ENCODE measurements at regions of chr17 and their contacts with region 1.

Region 1: DNA sequence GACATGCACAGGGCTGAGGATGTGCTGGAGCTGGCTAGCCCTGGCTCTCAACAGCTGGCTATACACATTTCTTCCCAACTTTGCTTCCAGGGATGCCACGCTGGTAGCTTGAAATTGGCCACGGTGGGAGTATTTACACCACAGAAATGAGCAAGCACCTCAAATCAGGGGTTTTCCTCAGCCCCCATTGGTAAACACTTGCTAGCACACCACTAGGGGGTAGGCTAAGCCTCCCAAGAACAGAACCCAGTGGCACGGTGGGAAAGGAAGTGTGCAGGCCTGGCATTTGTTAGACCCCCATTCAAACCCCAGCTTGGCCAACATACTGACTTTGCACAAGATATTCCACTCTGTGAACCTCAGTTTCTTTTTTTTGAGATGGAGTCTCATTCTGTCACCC is 12.9 kb downstream of the DRC3 start:
- DNase-seq: peak; percentile 29
- ATAC-seq: peak; percentile 77
- H3K4me3 Mint-ChIP-seq: no peak overlapping the region
- H3K27ac Mint-ChIP-seq: no peak overlapping the region
- H3K4me1 Mint-ChIP-seq: no peaks in the 10 kb centered on the region
- H3K27me3 Mint-ChIP-seq: no peaks in the 10 kb centered on the region
- CTCF ChIP-seq: peak; percentile 22

Region 2: DNA sequence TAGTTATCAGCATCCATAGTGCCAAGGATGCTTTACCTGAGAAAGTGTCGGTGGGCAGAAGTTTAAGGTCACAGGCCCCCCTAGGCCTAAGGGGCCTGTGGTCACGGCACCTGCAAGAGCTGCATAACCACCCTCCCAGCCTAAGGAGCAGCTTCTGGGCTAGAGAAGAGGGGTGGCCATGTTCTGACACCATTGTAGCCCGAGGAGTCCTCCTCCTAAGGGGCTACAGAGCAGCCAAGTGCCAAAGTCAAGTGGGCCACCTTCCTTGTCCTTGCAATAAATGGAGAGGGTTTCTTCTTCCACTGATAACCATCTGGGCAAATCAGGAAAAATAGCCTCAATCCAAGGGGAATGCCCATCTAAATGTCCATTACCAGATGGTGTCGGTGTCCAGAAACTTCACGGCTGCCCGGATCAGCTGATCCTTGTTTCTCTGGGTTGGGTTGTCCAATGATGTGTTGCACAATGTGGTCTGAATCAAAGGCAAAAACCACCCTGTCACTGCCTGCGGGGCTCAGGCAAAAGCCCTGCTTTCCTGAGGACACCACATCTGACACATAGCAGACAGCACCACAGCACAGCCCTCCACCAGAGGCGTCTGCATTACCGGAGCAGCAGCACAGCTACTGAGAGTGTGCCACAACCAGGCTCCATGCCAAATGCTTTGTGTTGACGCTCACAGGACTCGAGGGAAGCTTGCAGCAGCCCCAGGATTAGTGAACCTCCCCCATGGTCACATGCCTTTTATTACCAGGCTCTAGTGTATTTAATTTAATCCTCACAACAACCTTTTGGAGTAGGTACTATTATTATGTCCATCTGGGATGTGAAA is 40.6 kb after region 1 on chr17:
- CTCF ChIA-PET with region 1: interaction called, 11 read pairs
- POLR2A ChIA-PET with region 1: no interaction called
- intact Hi-C with region 1: no loop called
- DNase-seq: peak; percentile 63
- ATAC-seq: peak; percentile 77
- H3K4me3 Mint-ChIP-seq: no peak overlapping the region
- H3K27ac Mint-ChIP-seq: peak overlapping the region; percentile 27
- H3K4me1 Mint-ChIP-seq: peaks cover 16% of the 10 kb centered on the region
- H3K27me3 Mint-ChIP-seq: no peaks in the 10 kb centered on the region
- CTCF ChIP-seq: no peak

Region 3: DNA sequence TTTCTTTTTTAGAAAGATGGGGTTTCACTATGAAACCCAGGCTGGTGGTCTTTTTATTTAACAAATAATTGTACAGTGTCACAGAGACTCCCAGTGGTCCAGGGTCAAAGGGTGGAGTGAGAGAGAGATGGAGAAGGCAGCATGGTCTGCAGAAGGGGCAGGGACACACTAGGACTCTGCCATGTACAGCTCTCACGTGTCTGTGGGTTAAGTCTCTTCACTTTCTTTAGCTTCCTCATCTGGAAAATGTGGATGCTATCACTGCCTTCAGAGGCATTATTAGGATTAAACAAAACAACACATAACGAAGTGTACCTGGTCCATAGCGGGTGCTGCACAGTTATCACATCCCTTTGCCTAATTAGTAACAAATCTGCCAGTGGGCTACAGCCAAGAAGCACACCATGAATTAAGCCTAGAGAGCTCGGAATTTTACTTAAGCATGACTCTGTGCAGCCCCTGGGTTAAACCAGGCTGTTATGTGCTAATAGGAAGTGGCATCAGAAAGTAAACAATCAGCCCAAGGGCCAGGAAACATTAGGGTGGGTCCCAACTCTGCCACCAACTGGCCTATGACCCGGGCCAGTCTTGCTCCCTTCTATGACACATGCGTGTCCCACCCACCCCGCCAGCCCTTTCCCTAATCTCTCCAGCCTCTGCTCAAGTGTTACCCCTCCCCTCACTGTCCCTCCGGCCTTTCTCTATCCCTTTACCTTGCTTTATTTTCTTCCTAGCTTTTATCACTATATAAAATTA is 315.3 kb after region 1 on chr17:
- CTCF ChIA-PET with region 1: no interaction called
- POLR2A ChIA-PET with region 1: no interaction called
- intact Hi-C with region 1: no loop called
- DNase-seq: no peak
- ATAC-seq: no peak
- H3K4me3 Mint-ChIP-seq: no peak overlapping the region
- H3K27ac Mint-ChIP-seq: no peak overlapping the region
- H3K4me1 Mint-ChIP-seq: no peaks in the 10 kb centered on the region
- H3K27me3 Mint-ChIP-seq: no peaks in the 10 kb centered on the region
- CTCF ChIP-seq: no peak

Measured in activated CD8-positive, alpha-beta T cell treated with anti-CD3 and anti-CD28 coated beads for 36 hours (primary cell).